ENCODE measurements at regions of chr7 and their contacts with region 1.

Region 1: DNA sequence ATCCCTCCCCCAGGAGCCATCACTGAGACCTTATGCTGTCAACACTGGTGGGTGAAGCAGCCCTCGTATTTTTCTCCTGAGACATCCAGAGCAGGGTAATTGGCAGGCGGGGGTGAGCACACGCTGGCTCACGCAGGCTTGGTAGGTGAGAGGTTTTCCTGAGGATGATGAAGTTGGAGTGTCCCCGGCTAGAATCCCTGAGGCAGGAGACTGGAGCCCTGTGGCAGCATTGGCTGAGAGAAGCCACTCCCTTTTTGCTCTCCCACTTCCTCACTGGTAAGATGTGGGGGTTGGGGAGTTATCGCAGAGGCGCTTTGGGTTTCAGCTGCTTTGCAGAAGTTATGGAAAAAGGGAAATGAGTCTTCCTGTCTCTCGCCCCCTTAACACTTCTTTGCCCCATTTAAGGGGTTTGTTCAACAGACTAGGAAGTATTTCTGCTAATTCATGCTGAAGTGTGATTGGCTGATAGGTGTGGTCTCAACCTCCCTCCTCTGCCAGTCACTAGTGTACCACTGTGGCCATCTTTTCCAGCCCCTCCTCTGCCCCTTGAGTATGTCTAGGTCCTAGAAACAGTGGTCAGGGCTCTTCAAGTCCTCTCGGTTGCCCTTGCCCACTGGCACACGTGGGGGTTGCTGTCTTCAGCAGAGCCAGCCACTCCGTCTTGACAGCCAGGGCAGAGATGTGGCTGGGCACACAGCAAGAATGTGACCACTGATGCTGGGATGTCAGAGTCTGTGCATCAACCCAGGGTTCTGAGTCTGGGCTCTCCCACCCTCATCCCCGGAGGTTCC is 5.7 kb downstream of the ARPC1B start:
- DNase-seq: peak; percentile 26
- H3K4me3 Mint-ChIP-seq: peak overlapping the region; percentile 86
- H3K27ac Mint-ChIP-seq: peak overlapping the region; percentile 91
- H3K4me1 Mint-ChIP-seq: peaks cover 34% of the 10 kb centered on the region
- H3K27me3 Mint-ChIP-seq: no peaks in the 10 kb centered on the region

Region 2: GRCh38 chr7:99331002-99331401 is 49.2 kb before region 1 on chr7:
- intact Hi-C with region 1: loop called (anchors 2 kb)
- DNase-seq: no peak
- H3K4me3 Mint-ChIP-seq: peak overlapping the region; percentile 11
- H3K27ac Mint-ChIP-seq: peak overlapping the region; percentile 81
- H3K4me1 Mint-ChIP-seq: peaks cover 53% of the 10 kb centered on the region
- H3K27me3 Mint-ChIP-seq: no peaks in the 10 kb centered on the region

Region 3: DNA sequence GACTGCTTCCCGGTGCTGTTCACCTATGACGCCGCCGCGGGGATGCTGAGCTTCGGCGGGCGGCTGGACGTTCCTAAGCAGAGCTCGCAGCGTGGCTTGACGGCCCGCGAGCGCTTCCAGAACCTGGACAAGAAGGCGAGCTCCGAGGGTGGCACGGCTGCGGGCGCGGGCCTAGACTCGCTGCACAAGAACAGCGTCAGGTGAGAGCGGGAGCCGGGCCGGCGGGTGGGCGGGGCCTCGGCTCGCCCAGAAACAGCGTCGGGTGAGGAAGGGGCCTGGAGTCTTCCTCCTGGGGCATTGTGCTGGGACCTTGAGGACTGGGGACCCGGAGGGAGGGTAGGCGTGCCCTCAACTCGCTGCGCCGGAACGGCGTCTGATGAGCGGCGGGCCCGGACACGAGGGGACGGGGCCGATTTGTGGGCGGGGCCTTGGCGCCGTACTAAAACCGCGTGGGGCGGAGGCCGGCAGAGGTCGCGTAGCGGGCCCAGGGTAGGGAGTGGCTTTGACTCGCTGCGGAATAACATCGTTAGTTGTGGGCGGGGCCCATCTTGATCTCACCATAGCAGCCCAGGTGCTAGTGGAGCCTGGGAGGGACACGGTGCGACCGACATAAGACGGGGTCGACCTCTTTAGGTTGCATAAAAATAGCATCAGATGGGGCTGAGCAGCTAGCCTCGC is 12.6 kb after region 1 on chr7:
- intact Hi-C with region 1: loop called (anchors 1 kb)
- DNase-seq: peak; percentile 69
- H3K4me3 Mint-ChIP-seq: peak overlapping the region; percentile 63
- H3K27ac Mint-ChIP-seq: peak overlapping the region; percentile 68
- H3K4me1 Mint-ChIP-seq: peaks cover 16% of the 10 kb centered on the region
- H3K27me3 Mint-ChIP-seq: no peaks in the 10 kb centered on the region

Region 4: GRCh38 chr7:99525713-99526440 is 145.7 kb after region 1 on chr7:
- intact Hi-C with region 1: no loop called
- DNase-seq: no peak
- H3K4me3 Mint-ChIP-seq: no peak overlapping the region
- H3K27ac Mint-ChIP-seq: no peak overlapping the region
- H3K4me1 Mint-ChIP-seq: peaks cover 5% of the 10 kb centered on the region
- H3K27me3 Mint-ChIP-seq: no peaks in the 10 kb centered on the region

Measured in activated T-helper 1 cell treated with anti-CD3 and anti-CD28 coated beads, Interleukin-12 subunit alpha, Interleukin-12 subunit beta, Interleukin-2, Interleukin-4 antibody, amounts not matched to agents 30 ng/mL and 10 ng/mL and 1 ng/mL, durations not matched to agents 14 hours and 24 hours and 36 hours (primary cell).